ENCODE measurements at regions of chr3 and their contacts with region 1.

Region 1: DNA sequence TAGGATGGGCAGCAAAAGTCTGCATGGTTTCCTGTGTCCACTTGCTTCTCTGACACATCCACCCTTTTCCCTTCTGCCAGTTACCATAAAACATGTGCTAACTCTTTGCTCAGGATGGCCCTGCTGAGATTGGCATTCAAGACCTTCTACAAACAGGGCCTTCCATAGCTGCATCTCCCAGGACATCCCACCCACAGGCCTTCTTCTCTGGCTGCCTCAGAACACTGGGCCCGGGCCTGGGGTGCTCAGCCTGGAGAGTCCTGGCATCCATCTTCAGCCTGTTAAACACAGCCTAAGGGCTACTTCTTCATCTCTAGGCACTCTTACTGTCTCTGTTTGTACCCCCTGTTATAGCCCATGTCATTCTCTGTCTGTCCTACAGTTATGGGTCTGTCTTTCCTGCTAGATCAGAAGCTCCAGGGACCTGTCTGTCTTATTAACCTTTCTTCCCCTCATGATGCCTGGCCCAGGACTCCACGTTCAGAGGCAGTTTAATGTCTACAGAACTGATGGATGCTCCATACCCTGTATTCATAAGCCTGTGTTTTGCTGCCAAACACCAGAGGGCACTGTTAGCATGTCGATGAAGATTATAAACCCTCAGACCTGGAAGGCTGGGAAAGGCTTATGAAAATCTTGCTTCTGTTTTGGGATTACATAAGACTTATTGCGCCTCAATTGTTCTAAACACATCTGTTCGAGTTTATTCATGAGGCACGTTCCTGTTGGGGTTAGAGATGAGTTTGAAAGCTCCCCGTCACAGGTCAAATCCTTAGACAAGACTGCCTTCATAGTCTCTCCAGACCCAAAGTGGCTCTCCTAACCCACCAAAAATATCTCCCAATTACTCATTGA is 16.5 kb downstream of the SEMA3G start:
- DNase-seq: peak; percentile 64
- ATAC-seq: peak; percentile 72 to 79

Region 2: GRCh38 chr3:52385157-52385556 is 43.2 kb before region 1 on chr3:
- intact Hi-C with region 1: no loop called
- DNase-seq: no peak
- ATAC-seq: no peak

Region 3: GRCh38 chr3:52446631-52447511 is 18.5 kb after region 1 on chr3:
- intact Hi-C with region 1: loop called in 1 of 2 experiments (anchors 1 kb)
- DNase-seq: peak; percentile 68
- ATAC-seq: peak; percentile 29 to 34

Region 4: DNA sequence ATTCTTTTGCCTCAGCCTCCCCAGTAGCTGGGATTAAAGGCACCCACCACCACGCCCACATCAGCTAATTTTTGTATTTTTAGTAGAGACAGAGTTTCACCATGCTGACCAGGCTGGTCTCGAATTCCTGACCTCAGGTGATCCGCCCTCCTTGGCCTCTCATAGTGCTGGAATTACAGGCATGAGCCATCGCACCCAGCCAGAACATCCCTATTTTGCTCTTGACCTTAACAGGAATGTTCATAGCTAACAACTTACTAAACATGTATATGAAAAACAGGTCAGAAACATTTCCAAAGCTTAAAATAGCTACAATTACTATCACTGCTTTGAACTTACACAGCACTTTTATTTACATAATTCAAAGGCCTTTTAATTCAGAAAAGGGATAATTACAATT is 141.7 kb after region 1 on chr3:
- intact Hi-C with region 1: no loop called
- DNase-seq: no peak
- ATAC-seq: peak in 1 of 2 donors; percentile 61

Region 5: DNA sequence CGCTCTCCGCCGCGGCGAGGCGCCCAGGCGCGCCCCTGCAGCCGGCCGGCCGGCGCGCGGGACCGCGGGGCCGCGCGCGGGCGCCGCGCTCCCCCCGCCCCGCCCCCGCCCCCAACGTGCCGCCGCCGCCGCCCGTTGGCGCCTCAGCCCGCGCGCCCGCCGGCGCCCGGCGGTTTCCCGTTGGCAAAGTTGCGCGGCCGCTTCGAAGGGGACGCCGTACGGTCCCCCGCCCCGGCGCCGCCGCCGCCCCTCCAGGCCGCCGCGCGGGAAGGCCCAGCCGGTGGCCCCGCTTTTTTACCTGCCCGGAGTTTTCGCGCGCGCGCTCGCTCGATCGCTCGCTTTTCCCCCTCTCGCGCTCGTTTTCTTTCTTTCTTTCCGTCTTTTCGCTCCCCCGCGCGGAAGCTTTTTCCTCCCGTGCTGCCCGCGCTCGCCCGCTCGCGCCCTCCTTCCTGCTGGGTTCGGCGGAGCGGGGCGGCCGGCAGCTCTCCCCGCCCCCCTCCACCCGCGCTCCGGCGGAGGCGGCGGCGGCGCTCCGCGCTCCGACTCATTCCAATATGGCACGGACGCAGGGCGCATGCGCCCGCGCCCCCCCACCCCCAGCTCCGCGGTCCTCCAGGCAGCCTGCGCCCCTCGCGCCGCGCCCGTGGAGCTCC is 617.3 kb after region 1 on chr3 and contains the start of gene SFMBT1:
- intact Hi-C with region 1: no loop called
- DNase-seq: peak; percentile 76
- ATAC-seq: peak; percentile 81 to 84
- total RNA-seq, gene SFMBT1: 12.7 to 16.4 TPM

Measured in left cardiac atrium (tissue), 4 donors.